MCF 10A (cell line): ENCODE measurements at regions of chr1 and their contacts with region 1.

Region 1: DNA sequence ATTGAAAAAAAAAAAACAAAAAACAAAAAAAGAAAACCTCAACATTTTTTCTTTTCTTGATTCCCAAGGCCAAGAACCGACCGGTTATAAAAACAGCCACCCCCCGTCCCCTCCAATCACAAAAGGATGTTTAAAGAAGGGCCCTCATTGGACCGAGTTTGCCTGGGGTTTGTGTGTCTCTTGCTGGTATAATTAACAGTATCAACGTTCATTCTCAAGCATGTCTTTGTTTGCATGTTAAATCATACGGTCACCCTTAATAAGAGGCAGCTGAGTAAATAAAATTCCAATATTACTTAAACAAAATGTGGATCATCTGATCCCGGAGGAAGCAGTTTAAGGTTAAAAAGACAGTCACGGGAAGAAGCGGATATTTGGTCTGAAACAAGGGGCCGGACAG is 201.1 kb downstream of the PRDM2 start:
- DNase-seq: no peak
- H3K4me3 Mint-ChIP-seq: no peak overlapping the region
- H3K27ac Mint-ChIP-seq: peak overlapping the region; percentile 58
- H3K4me1 Mint-ChIP-seq: peaks cover 13% of the 10 kb centered on the region
- H3K27me3 Mint-ChIP-seq: no peaks in the 10 kb centered on the region
- CTCF ChIP-seq: no peak

Region 2: GRCh38 chr1:13881410-13882025 is 19.5 kb before region 1 on chr1:
- CTCF ChIA-PET with region 1: no interaction called
- POLR2A ChIA-PET with region 1: interaction called, 8 read pairs
- intact Hi-C with region 1: loop called (anchors 2 kb)
- DNase-seq: peak; percentile 38
- H3K4me3 Mint-ChIP-seq: no peak overlapping the region
- H3K27ac Mint-ChIP-seq: peak overlapping the region; percentile 17
- H3K4me1 Mint-ChIP-seq: peaks cover 13% of the 10 kb centered on the region
- H3K27me3 Mint-ChIP-seq: no peaks in the 10 kb centered on the region
- CTCF ChIP-seq: no peak

Region 3: GRCh38 chr1:14282707-14283106 is 381.7 kb after region 1 on chr1:
- CTCF ChIA-PET with region 1: no interaction called
- POLR2A ChIA-PET with region 1: no interaction called
- intact Hi-C with region 1: no loop called
- DNase-seq: peak; percentile 5
- H3K4me3 Mint-ChIP-seq: no peak overlapping the region
- H3K27ac Mint-ChIP-seq: peak overlapping the region; percentile 49
- H3K4me1 Mint-ChIP-seq: peaks cover 10% of the 10 kb centered on the region
- H3K27me3 Mint-ChIP-seq: no peaks in the 10 kb centered on the region
- CTCF ChIP-seq: no peak